Activated CD4-positive, alpha-beta T cell treated with anti-CD3 and anti-CD28 coated beads, Interleukin-2, amount 10 ng/mL, durations not matched to agents 24 days and 14 days (primary cell): ENCODE measurements at regions of chr5 and their contacts with region 1.

Region 1: DNA sequence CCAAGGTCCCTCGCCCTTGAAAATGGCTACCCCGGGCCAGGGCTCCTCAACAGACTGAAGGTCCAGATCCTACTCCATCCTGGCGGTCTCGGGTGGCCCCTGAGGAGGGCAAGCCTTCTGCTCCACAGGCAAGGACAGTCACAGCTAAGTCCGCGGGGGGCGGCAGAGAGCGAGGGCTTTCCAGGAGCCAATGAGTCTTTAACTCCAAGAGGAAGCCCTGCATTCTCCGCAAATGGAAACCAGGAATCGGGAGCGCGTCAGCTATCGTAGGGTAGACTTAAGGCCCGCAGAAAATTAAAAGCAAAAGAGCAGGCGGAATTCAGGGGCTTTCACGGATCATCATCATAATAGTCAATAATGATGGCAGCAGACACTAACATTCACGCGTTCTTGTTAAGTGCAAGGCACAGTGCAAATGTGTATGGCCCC is 87.8 kb upstream of the TNFAIP8 start:
- DNase-seq: peak; percentile 93
- H3K4me3 Mint-ChIP-seq: peak overlapping the region; percentile 95
- H3K27ac Mint-ChIP-seq: peak overlapping the region; percentile 97
- H3K4me1 Mint-ChIP-seq: peaks cover 54% of the 10 kb centered on the region
- H3K27me3 Mint-ChIP-seq: no peaks in the 10 kb centered on the region

Region 2: GRCh38 chr5:119031905-119032304 is 236.1 kb before region 1 on chr5:
- intact Hi-C with region 1: loop called (anchors 2 kb)
- DNase-seq: no peak
- H3K4me3 Mint-ChIP-seq: peak overlapping the region; percentile 26
- H3K27ac Mint-ChIP-seq: peak overlapping the region; percentile 7
- H3K4me1 Mint-ChIP-seq: peaks cover 23% of the 10 kb centered on the region
- H3K27me3 Mint-ChIP-seq: no peaks in the 10 kb centered on the region

Region 3: GRCh38 chr5:119079318-119079921 is 188.6 kb before region 1 on chr5:
- intact Hi-C with region 1: loop called (anchors 2 kb)
- DNase-seq: peak; percentile 77
- H3K4me3 Mint-ChIP-seq: peak overlapping the region; percentile 65
- H3K27ac Mint-ChIP-seq: peak overlapping the region; percentile 86
- H3K4me1 Mint-ChIP-seq: peaks cover 33% of the 10 kb centered on the region
- H3K27me3 Mint-ChIP-seq: no peaks in the 10 kb centered on the region

Region 4: GRCh38 chr5:119120893-119121292 is 147.1 kb before region 1 on chr5:
- intact Hi-C with region 1: no loop called
- DNase-seq: no peak
- H3K4me3 Mint-ChIP-seq: no peak overlapping the region
- H3K27ac Mint-ChIP-seq: no peak overlapping the region
- H3K4me1 Mint-ChIP-seq: peaks cover 2% of the 10 kb centered on the region
- H3K27me3 Mint-ChIP-seq: no peaks in the 10 kb centered on the region

Region 5: GRCh38 chr5:119315516-119315949 is 47.6 kb after region 1 on chr5:
- intact Hi-C with region 1: loop called (anchors 1 kb)
- DNase-seq: peak; percentile 86
- H3K4me3 Mint-ChIP-seq: peak overlapping the region; percentile 67
- H3K27ac Mint-ChIP-seq: peak overlapping the region; percentile 89
- H3K4me1 Mint-ChIP-seq: peaks cover 81% of the 10 kb centered on the region
- H3K27me3 Mint-ChIP-seq: no peaks in the 10 kb centered on the region

Region 6: GRCh38 chr5:119411935-119412602 is 144.1 kb after region 1 on chr5:
- intact Hi-C with region 1: loop called (anchors 1 kb)
- DNase-seq: peak; percentile 87
- H3K4me3 Mint-ChIP-seq: peak overlapping the region; percentile 85
- H3K27ac Mint-ChIP-seq: peak overlapping the region; percentile 70
- H3K4me1 Mint-ChIP-seq: peaks cover 32% of the 10 kb centered on the region
- H3K27me3 Mint-ChIP-seq: peaks cover 10% of the 10 kb centered on the region